H1 (cell line): ENCODE measurements at regions of chr14 and their contacts with region 1.

Region 1: GRCh38 chr14:102593062-102593824 is 794 bp downstream of the RCOR1 start:
- DNase-seq: peak in 1 of 2 experiments; percentile 73
- H3K4me3 ChIP-seq: peak overlapping the region; percentile 77 to 96 (median 80)
- H3K27ac ChIP-seq: no peak overlapping the region
- H3K4me1 ChIP-seq: peaks cover 3 to 21% (median 10%) of the 10 kb centered on the region in 4 experiments; a peak in 6 of 7 replicates
- H3K27me3 ChIP-seq: no peaks in the 10 kb centered on the region
- CTCF ChIP-seq: peak; percentile 1 to 21 (median 10); a peak in 3 of 4 replicates
- EP300 ChIP-seq: no peak
- POLR2A ChIP-seq: no peak
- RAD21 ChIP-seq: peak; percentile 9 to 29; a peak in 1 of 4 replicates

Region 2: DNA sequence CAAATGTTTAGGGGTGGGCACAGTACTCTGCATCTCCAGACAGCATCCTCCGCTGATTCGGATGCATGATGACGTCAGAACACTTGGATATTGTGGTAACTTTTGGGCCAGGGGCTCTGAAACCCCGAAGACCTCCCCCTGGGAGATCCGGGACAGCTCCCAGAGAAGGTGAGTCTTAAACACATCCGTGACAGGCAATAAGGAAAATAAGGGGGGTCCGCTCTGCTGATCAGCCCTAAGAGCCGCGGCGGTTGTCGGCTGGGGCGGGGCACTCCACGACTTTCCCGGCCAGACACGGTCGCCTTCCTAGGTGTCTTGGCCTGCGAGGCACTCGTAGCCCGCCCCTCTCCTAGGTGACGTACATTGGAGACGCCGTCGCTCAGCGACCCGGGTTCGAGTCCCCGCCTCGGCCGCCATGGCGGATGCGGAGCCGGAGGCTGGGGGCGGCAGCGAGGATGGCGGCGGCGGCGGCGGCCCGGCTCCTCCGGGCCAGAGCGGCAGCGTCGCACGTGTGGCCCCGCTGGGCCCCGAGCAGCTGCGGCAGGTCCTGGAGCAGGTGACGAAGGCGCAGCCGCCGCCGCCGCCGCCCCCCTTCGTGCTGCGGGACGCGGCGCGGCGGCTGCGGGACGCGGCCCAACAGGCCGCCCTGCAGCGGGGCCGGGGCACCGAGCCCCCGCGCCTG is 273.8 kb before region 1 on chr14 and contains the start of gene ZNF839:
- CTCF ChIA-PET with region 1: no interaction called
- POLR2A ChIA-PET with region 1: no interaction called
- DNase-seq: peak; percentile 66 to 96
- H3K4me3 ChIP-seq: peak within 1 kb of the TSS; percentile 78 to 97 (median 86)
- H3K27ac ChIP-seq: peak within 1 kb of the TSS; percentile 62; the same call in 1 of the 2 replicates
- H3K4me1 ChIP-seq: peaks cover 0 to 9% (median 4%) of the 10 kb centered on the region in 4 experiments; a peak in 4 of 7 replicates
- H3K27me3 ChIP-seq: peaks cover 0 to 11% (median 10%) of the 10 kb centered on the region in 4 experiments; a peak in 5 of 7 replicates
- CTCF ChIP-seq: no peak
- EP300 ChIP-seq: no peak
- POLR2A ChIP-seq: no peak
- RAD21 ChIP-seq: no peak
- total RNA-seq, gene ZNF839: 8.3 and 9.4 TPM in 2 replicates

Region 3: DNA sequence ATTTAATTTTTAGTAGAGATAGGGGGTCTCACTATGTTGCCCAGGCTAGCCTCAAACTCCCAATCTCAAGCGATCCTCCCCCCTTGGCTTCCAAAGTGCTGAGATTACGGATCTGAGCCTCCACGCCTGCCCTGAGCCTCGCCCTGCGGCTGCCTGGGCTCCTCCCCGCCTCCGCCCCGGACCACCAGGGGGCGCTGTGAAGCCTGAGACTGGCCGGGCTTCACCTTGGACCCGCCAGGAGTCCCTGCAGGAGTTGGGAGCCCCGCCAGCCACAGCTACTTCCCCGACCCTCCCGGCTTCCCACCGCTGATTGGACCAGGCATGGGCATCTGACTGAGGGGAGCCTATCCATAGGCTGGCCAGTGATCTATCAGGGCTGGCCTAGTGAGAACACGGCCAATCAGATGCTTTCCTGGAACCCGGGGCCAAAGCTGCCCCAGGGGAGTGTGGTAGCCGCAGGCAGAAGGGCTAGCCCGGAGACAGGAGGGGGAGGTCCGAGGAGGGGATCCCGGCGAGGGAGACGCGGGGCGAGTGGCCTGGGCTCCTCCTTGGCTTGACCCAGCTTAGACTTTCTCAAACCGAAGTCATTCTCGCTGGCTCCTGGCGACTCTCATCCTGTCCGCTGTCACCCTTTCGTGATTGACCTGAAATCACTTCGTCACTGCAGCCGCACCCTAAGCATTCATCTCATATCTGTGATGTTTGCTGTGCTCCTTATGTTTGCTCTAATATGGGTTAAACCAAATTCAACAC is 68.6 kb before region 1 on chr14:
- CTCF ChIA-PET with region 1: interaction called, 16 read pairs
- POLR2A ChIA-PET with region 1: interaction called, 4 read pairs
- DNase-seq: peak; percentile 99 to 100
- H3K4me3 ChIP-seq: peak overlapping the region; percentile 33 to 67 (median 49); a peak in 7 of 8 replicates
- H3K27ac ChIP-seq: no peak overlapping the region
- H3K4me1 ChIP-seq: peaks cover 0 to 10% (median 0%) of the 10 kb centered on the region in 4 experiments; a peak in 2 of 7 replicates
- H3K27me3 ChIP-seq: no peaks in the 10 kb centered on the region
- CTCF ChIP-seq: peak; percentile 89 to 97 (median 91)
- EP300 ChIP-seq: no peak; a peak in 1 of 3 replicates
- POLR2A ChIP-seq: peak in 1 of 2 experiments; percentile 70; a peak in 2 of 3 replicates
- RAD21 ChIP-seq: peak; percentile 82 to 90

Region 4: GRCh38 chr14:102608064-102608446 is 14.8 kb after region 1 on chr14:
- CTCF ChIA-PET with region 1: interaction called, 51 read pairs
- POLR2A ChIA-PET with region 1: interaction called, 3 read pairs
- DNase-seq: no peak
- H3K4me3 ChIP-seq: no peak overlapping the region
- H3K27ac ChIP-seq: no peak overlapping the region
- H3K4me1 ChIP-seq: no peaks in the 10 kb centered on the region
- H3K27me3 ChIP-seq: no peaks in the 10 kb centered on the region
- CTCF ChIP-seq: no peak
- EP300 ChIP-seq: no peak
- POLR2A ChIP-seq: no peak
- RAD21 ChIP-seq: no peak

Region 5: GRCh38 chr14:102645746-102646440 is 52.6 kb after region 1 on chr14:
- CTCF ChIA-PET with region 1: interaction called, 18 read pairs
- POLR2A ChIA-PET with region 1: interaction called, 3 read pairs
- DNase-seq: no peak
- H3K4me3 ChIP-seq: no peak overlapping the region
- H3K27ac ChIP-seq: no peak overlapping the region
- H3K4me1 ChIP-seq: peaks cover 0 to 12% (median 5%) of the 10 kb centered on the region in 4 experiments; a peak in 4 of 7 replicates
- H3K27me3 ChIP-seq: no peaks in the 10 kb centered on the region
- CTCF ChIP-seq: no peak
- EP300 ChIP-seq: no peak
- POLR2A ChIP-seq: no peak
- RAD21 ChIP-seq: no peak

Region 6: GRCh38 chr14:102683399-102684297 is 90.4 kb after region 1 on chr14:
- CTCF ChIA-PET with region 1: interaction called, 13 read pairs
- POLR2A ChIA-PET with region 1: no interaction called
- DNase-seq: no peak
- H3K4me3 ChIP-seq: no peak overlapping the region
- H3K27ac ChIP-seq: no peak overlapping the region
- H3K4me1 ChIP-seq: peaks cover 0 to 11% (median 7%) of the 10 kb centered on the region in 4 experiments; a peak in 6 of 7 replicates
- H3K27me3 ChIP-seq: no peaks in the 10 kb centered on the region
- CTCF ChIP-seq: no peak
- EP300 ChIP-seq: no peak
- POLR2A ChIP-seq: no peak
- RAD21 ChIP-seq: no peak